HCT116 (cell line): ENCODE measurements at regions of chr3 and their contacts with region 1.

Region 1: GRCh38 chr3:190513409-190514162 is at the start of gene IL1RAP:
- DNase-seq: peak; percentile 66
- ATAC-seq: peak; percentile 98
- H3K4me3 ChIP-seq: peak within 1 kb of the TSS; percentile 79 to 81
- H3K27ac ChIP-seq: peak within 1 kb of the TSS; percentile 3; the same call in 1 of the 2 replicates
- H3K4me1 ChIP-seq: peaks cover 0 to 19% of the 10 kb centered on the region in 2 experiments; a peak in 1 of 4 replicates
- H3K27me3 ChIP-seq: no peaks in the 10 kb centered on the region
- CTCF ChIP-seq: peak; percentile 13 to 47 (median 43); a peak in 4 of 6 replicates
- POLR2A ChIP-seq: peak; percentile 52
- RAD21 ChIP-seq: no peak
- total RNA-seq, gene IL1RAP: 5.8 TPM

Region 2: GRCh38 chr3:189961525-189962161 is 551.9 kb before region 1 on chr3:
- CTCF ChIA-PET with region 1: no interaction called
- POLR2A ChIA-PET with region 1: no interaction called
- RAD21 ChIA-PET with region 1: no interaction called
- intact Hi-C with region 1: no loop called
- DNase-seq: peak; percentile 75
- ATAC-seq: peak; percentile 66
- H3K4me3 ChIP-seq: no peak overlapping the region
- H3K27ac ChIP-seq: no peak overlapping the region
- H3K4me1 ChIP-seq: peaks cover 3 to 7% of the 10 kb centered on the region in 2 experiments; a peak in 2 of 4 replicates
- H3K27me3 ChIP-seq: no peaks in the 10 kb centered on the region
- CTCF ChIP-seq: peak; percentile 80 to 89 (median 86); a peak in 5 of 6 replicates
- POLR2A ChIP-seq: no peak
- RAD21 ChIP-seq: peak; percentile 91

Region 3: DNA sequence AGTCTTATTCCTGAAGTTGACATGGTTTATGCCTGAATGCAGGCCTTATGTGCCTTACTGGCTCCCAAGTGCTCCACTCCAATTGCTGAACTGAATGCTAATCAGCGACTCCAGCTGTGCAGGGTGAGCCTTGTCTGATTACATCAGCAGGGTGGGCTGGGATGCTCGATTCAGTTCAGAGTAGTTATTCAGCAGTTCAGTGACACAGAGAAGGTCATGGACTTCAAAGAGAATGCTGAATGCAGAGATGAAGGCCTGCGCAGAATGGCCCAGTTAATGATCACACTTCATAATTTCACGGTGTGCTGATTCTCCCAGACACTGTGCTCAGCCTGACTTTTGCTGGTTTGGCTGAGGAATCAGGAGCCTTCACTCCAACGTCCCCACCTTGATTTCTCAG is 255.0 kb before region 1 on chr3:
- CTCF ChIA-PET with region 1: no interaction called
- POLR2A ChIA-PET with region 1: no interaction called
- RAD21 ChIA-PET with region 1: no interaction called
- intact Hi-C with region 1: no loop called
- DNase-seq: no peak
- ATAC-seq: no peak
- H3K4me3 ChIP-seq: no peak overlapping the region
- H3K27ac ChIP-seq: no peak overlapping the region
- H3K4me1 ChIP-seq: no peaks in the 10 kb centered on the region
- H3K27me3 ChIP-seq: no peaks in the 10 kb centered on the region
- CTCF ChIP-seq: no peak
- POLR2A ChIP-seq: no peak
- RAD21 ChIP-seq: no peak

Region 4: DNA sequence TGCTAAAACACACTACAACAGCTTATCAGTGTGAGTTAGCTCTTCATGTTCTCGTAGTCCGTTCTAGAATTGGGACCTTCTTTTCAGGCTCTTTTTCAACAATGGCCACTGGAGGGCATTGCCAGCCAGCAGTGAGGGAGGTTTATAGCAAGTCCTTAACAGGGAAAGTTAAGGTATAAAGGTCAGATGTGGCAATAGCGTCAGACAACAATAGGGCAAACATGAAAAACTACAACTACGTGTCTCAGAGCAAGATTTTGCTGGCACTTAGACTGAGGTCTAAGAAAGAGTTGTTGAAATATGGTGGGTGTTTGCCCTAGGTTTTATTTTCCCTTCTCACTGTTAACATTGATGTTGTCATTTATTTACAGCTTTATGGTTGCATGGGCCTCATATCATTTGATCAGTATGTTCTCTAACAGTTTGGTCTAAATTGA is 187.5 kb after region 1 on chr3:
- CTCF ChIA-PET with region 1: interaction called, 3 read pairs
- POLR2A ChIA-PET with region 1: interaction called, 4 read pairs
- RAD21 ChIA-PET with region 1: no interaction called
- intact Hi-C with region 1: loop called (anchors 2 kb)
- DNase-seq: peak; percentile 51
- ATAC-seq: peak; percentile 94
- H3K4me3 ChIP-seq: no peak overlapping the region
- H3K27ac ChIP-seq: no peak overlapping the region
- H3K4me1 ChIP-seq: peaks cover 0 to 3% of the 10 kb centered on the region in 2 experiments; a peak in 1 of 4 replicates
- H3K27me3 ChIP-seq: no peaks in the 10 kb centered on the region
- CTCF ChIP-seq: peak; percentile 62 to 77 (median 68); a peak in 5 of 6 replicates
- POLR2A ChIP-seq: no peak
- RAD21 ChIP-seq: peak; percentile 85